ENCODE measurements at regions of chr1 and their contacts with region 1.

Region 1: DNA sequence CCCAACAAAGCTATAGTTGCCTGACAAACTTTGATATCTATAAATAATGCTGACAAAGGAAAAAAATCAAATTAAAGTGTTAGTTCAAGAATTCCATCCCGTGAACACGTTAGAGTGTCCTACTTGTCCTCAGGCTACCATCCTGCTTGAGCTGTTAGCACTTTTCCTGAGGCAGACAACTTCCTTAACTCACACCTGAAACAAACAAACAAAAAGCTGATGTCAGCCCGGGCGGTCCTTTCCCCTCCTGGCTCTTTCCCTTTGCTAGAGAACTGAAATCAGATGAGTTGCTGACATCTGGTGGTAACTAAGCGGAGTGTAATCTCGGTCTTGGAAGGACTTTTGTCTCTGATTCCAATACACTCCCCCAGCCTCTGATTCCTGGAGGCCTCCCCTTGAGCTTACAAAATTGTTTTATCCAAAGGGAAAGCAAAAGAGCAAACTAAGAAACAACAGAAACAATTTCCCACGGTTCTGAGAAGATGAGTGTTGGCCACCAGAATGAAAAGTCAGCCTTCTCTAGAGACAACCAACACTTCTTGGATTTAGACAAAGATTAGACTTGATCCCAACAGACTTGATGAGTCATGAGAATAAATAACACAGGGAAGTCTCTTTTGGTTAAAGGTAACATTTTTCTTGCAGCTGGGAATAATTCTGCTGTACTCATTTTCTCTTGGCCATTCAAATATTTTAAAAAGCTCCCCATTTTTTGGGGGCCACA is 135.4 kb downstream of the PROX1 start:
- DNase-seq: no peak
- ATAC-seq: peak; percentile 93
- H3K4me3 ChIP-seq: no peak overlapping the region
- H3K27ac ChIP-seq: no peak overlapping the region
- H3K4me1 ChIP-seq: no peaks in the 10 kb centered on the region
- H3K27me3 ChIP-seq: no peaks in the 10 kb centered on the region
- CTCF ChIP-seq: peak; percentile 44 to 69 (median 49); a peak in 5 of 6 replicates
- EP300 ChIP-seq: no peak
- POLR2A ChIP-seq: no peak
- RAD21 ChIP-seq: peak; percentile 77

Region 2: DNA sequence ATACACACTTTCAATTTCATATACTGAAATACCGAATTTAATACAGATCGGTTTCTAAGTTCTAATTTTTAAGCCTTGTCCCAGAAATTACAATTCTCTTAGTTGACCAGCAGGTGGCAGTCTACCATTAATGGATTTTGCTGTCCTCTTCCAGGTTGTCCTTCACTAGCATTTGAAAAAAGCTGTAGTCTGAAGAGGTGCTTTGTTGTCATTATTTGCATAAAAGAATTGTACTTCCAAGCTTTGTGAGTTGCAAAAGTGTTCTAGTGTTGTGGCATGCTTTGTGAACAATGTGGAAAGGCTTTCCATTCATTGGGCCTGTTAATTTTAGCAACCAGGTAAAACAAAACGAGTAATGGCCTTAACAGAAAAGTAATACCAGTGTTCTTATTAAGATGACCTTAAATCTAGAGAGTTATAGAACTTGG is 878.5 kb before region 1 on chr1:
- CTCF ChIA-PET with region 1: interaction called, 12 read pairs
- POLR2A ChIA-PET with region 1: no interaction called
- RAD21 ChIA-PET with region 1: interaction called, 3 read pairs
- SMC1A ChIA-PET with region 1: no interaction called
- in situ Hi-C with region 1: loop called (anchors 10 kb)
- intact Hi-C with region 1: loop called (anchors 1 kb)
- DNase-seq: no peak
- ATAC-seq: peak; percentile 75
- H3K4me3 ChIP-seq: no peak overlapping the region
- H3K27ac ChIP-seq: no peak overlapping the region
- H3K4me1 ChIP-seq: no peaks in the 10 kb centered on the region
- H3K27me3 ChIP-seq: no peaks in the 10 kb centered on the region
- CTCF ChIP-seq: peak; percentile 60 to 76 (median 75)
- EP300 ChIP-seq: no peak
- POLR2A ChIP-seq: no peak
- RAD21 ChIP-seq: peak; percentile 70

Region 3: DNA sequence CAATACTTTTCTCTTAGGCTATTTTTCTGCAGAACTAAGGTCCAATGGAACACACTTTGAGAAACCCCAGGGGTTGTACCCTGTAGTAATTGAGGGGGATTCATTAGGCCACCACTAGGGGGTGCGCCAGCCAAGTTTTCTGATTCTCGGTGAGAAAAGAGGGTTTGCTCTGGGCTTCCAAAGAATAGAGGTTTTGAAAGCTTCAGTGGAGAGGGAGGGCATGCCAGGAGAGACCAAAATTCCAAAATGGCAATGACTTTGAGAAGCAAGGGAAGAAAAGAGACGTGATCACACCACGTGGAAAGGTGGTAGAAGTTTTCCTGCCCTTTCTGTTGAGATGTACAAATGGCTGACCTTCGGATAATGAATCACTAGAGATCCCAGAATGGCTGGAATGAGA is 748.9 kb before region 1 on chr1:
- CTCF ChIA-PET with region 1: interaction called, 10 read pairs
- POLR2A ChIA-PET with region 1: no interaction called
- RAD21 ChIA-PET with region 1: interaction called, 7 read pairs
- SMC1A ChIA-PET with region 1: interaction called, 6 read pairs
- in situ Hi-C with region 1: loop called (anchors 5 kb)
- intact Hi-C with region 1: loop called (anchors 1 kb)
- DNase-seq: no peak
- ATAC-seq: peak; percentile 96
- H3K4me3 ChIP-seq: no peak overlapping the region
- H3K27ac ChIP-seq: no peak overlapping the region
- H3K4me1 ChIP-seq: no peaks in the 10 kb centered on the region
- H3K27me3 ChIP-seq: no peaks in the 10 kb centered on the region
- CTCF ChIP-seq: peak; percentile 84 to 86 (median 84)
- EP300 ChIP-seq: no peak
- POLR2A ChIP-seq: no peak
- RAD21 ChIP-seq: peak; percentile 86

Region 4: GRCh38 chr1:213925531-213926182 is 197.6 kb before region 1 on chr1:
- CTCF ChIA-PET with region 1: no interaction called
- POLR2A ChIA-PET with region 1: no interaction called
- RAD21 ChIA-PET with region 1: no interaction called
- SMC1A ChIA-PET with region 1: no interaction called
- in situ Hi-C with region 1: no loop called
- intact Hi-C with region 1: no loop called
- DNase-seq: no peak
- ATAC-seq: no peak
- H3K4me3 ChIP-seq: no peak overlapping the region
- H3K27ac ChIP-seq: no peak overlapping the region
- H3K4me1 ChIP-seq: no peaks in the 10 kb centered on the region
- H3K27me3 ChIP-seq: no peaks in the 10 kb centered on the region
- CTCF ChIP-seq: no peak
- EP300 ChIP-seq: no peak
- POLR2A ChIP-seq: no peak
- RAD21 ChIP-seq: no peak

Region 5: GRCh38 chr1:213947200-213947775 is 175.9 kb before region 1 on chr1:
- CTCF ChIA-PET with region 1: no interaction called
- POLR2A ChIA-PET with region 1: no interaction called
- RAD21 ChIA-PET with region 1: no interaction called
- SMC1A ChIA-PET with region 1: no interaction called
- in situ Hi-C with region 1: no loop called
- intact Hi-C with region 1: no loop called
- DNase-seq: no peak
- ATAC-seq: no peak
- H3K4me3 ChIP-seq: no peak overlapping the region
- H3K27ac ChIP-seq: no peak overlapping the region
- H3K4me1 ChIP-seq: no peaks in the 10 kb centered on the region
- H3K27me3 ChIP-seq: no peaks in the 10 kb centered on the region; a peak in 1 of 4 replicates
- CTCF ChIP-seq: no peak
- EP300 ChIP-seq: no peak
- POLR2A ChIP-seq: no peak
- RAD21 ChIP-seq: no peak

Region 6: DNA sequence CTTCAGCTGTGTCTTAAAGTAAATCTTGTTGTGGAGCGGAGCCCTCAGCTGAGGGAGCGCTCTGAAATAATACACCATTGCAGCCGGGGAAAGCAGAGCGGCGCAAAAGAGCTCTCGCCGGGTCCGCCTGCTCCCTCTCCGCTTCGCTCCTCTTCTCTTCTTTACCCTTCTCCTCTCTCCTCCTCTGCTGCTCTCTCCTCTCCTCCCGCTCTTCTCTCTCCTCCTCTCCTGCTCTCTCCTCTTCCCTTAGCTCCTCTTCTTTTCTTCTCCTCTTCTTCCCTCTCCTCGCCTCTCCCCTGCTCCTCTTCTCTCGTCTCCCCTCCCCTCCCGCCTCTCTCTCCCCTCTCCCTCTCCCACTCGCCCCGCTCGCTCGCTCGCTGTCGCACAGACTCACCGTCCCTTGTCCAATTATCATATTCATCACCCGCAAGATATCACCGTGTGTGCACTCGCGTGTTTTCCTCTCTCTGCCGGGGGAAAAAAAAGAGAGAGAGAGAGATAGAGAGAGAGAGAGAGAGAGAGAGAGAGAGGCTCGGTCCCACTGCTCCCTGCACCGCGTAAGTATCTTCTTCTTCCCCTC is 135.2 kb before region 1 on chr1 and contains the start of gene PROX1:
- CTCF ChIA-PET with region 1: interaction called, 3 read pairs
- POLR2A ChIA-PET with region 1: no interaction called
- RAD21 ChIA-PET with region 1: no interaction called
- SMC1A ChIA-PET with region 1: no interaction called
- in situ Hi-C with region 1: no loop called
- intact Hi-C with region 1: loop called (anchors 5 kb)
- DNase-seq: no peak
- ATAC-seq: peak; percentile 26; the same call in 2 of the 3 replicates
- H3K4me3 ChIP-seq: peak within 1 kb of the TSS; percentile 55
- H3K27ac ChIP-seq: no peak within 1 kb of the TSS
- H3K4me1 ChIP-seq: peaks cover 2% of the 10 kb centered on the region; the same call in 1 of the 2 replicates
- H3K27me3 ChIP-seq: peaks cover 19 to 34% of the 10 kb centered on the region in 2 experiments
- CTCF ChIP-seq: no peak
- EP300 ChIP-seq: no peak
- POLR2A ChIP-seq: no peak
- RAD21 ChIP-seq: no peak
- polyA plus RNA-seq, gene PROX1: not detected